ENCODE measurements at regions of chr17 and their contacts with region 1.

Region 1: GRCh38 chr17:38557836-38558727 is 47.7 kb downstream of the SRCIN1 start:
- DNase-seq: peak; percentile 93
- CTCF ChIP-seq: peak; percentile 96

Region 2: GRCh38 chr17:38326996-38327792 is 230.9 kb before region 1 on chr17:
- CTCF ChIA-PET with region 1: no interaction called
- POLR2A ChIA-PET with region 1: no interaction called
- DNase-seq: no peak
- CTCF ChIP-seq: no peak

Region 3: DNA sequence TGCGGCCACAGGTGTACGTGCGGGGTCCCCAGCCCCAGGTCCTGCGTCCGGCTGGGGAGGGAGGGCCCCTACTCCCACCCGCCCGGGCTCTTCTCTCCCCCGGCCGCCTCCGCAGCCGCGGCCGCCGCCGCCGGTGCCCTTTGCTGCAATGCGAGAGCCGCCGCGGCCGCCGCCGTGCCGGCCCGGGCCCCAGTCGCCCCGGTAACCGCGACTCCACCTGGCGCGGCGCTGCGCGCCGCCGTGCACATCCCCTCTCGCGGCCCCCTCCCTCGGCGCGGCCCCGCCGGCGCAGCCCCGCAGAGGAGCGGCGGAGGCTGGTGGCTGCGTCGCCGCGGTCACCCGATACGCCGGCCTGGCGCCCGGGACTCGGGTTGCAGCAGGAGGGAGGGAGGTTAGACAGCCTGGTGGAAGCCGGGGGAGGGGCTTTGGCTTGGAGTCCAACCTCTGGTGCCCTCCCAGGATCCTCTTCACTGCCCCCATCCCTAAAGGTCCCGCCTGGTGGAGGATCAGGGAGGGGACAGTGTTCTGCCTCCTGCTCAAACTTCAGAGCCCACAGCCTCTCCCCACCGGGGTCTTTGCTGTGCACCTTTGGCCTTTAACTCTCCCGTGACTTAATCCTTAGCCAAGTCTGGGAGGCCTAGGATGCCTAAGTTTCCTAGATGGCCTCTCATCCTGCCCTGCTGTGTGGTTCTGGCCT is 14.7 kb after region 1 on chr17:
- CTCF ChIA-PET with region 1: interaction called, 21 read pairs
- POLR2A ChIA-PET with region 1: no interaction called
- DNase-seq: peak; percentile 47
- CTCF ChIP-seq: no peak

Region 4: DNA sequence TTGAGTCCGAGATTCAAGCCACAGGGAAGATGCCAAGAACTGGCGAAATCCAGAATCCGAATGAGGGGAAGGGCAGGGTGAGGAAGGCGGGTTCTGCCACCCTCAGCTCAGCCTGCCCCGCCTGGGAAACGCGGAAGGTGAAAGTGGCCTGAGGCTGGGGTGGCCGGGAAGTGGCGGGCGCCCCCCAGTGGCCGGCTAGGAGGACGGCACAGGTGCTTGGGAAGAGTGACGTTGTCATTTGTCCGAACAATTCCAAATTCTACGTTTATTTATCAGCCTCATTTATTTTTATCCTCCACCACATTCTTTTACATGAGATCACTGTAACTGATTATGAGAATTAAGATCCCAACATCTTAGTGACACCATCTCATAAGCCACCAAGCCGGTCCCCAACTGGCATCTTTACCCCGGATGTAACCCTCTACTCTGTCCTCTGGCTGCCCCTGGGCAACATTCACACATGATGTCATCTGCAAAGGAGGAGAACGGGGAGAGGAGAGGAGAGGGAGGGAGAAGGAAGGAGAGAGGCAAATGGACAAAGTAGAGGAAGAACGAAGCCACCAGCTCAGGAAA is 26.4 kb after region 1 on chr17:
- CTCF ChIA-PET with region 1: interaction called, 117 read pairs
- POLR2A ChIA-PET with region 1: interaction called, 4 read pairs
- DNase-seq: peak; percentile 84
- CTCF ChIP-seq: peak; percentile 85

Region 5: GRCh38 chr17:38605888-38606645 is 48.0 kb after region 1 on chr17 and contains the start of gene SRCIN1:
- CTCF ChIA-PET with region 1: interaction called, 22 read pairs
- POLR2A ChIA-PET with region 1: no interaction called
- DNase-seq: peak; percentile 79
- CTCF ChIP-seq: peak; percentile 99

Region 6: DNA sequence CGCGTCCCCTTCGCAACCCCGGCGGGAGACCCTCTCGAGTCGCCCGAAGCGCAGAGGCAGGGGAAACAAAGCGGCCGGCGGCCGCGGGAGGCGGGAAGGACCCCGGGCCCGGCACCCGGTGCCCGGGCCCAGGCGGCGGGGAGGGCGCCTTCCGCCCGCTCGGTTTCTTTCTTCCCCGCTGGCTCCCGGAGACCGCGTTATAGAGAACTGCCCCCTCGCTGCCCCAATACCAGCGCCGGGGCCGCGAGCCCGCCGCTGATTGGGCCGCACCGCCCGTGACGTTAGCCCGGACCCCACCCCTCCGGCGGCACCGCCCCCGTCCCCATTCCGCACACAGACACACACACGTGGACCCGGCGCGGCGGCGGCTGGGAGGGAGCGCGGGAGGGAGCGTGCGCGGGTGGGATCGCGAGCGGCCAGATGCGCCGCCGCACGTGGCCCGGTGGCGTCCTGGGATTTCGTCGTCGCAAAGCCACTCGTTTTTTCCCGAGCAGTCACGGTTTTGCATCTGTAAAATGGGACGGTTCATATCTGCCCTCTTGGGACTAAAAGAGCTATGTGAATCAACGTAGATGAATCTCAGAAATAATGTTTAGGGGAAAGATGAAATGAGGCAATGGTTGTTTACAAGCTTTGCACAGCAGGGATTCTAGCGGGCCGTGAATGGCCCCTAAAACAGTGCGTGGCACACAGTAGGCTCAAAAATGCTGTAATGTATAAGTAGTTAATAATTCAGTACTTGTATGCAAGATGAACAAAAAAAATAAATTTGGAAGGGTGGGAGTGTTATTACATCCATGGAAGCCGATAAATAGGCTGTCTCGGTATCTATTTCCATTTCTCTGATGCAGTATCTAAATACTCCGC is 116.9 kb after region 1 on chr17 and contains the start of gene EPOP:
- CTCF ChIA-PET with region 1: interaction called, 416 read pairs
- POLR2A ChIA-PET with region 1: no interaction called
- DNase-seq: peak; percentile 94
- CTCF ChIP-seq: no peak